K562 (cell line): ENCODE measurements at regions of chr12 and their contacts with region 1.

Region 1: DNA sequence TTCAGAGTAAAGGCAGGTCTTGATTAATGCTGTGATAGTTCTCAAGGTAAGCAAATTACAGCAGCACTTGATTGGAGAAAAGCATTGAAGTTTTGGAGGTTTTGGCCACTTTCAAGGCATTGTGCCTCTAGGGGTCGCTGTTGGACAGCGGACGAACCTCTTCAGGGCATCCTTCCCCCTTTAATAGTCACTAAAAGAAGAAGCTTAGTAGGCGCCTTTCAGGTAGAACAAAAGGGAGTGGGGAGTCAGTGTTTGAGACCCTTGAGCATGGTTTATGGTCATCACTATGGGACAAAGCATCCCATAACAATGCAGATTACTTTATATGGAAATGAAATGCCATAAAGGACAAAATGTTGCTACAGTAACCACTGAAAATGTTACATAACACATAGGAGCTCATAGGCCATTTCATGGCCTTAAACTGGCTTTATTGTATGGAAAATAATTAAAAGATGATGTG is 199.5 kb upstream of the DCN start:
- DNase-seq: peak; percentile 42 to 85 (median 50)
- ATAC-seq: peak; percentile 84
- H3K4me3 ChIP-seq: no peak overlapping the region
- H3K27ac ChIP-seq: no peak overlapping the region
- H3K4me1 ChIP-seq: no peaks in the 10 kb centered on the region
- H3K27me3 ChIP-seq: no peaks in the 10 kb centered on the region
- CTCF ChIP-seq: peak; percentile 66 to 88 (median 82)
- EP300 ChIP-seq: no peak
- POLR2A ChIP-seq: no peak
- RAD21 ChIP-seq: peak; percentile 79 to 83

Region 2: DNA sequence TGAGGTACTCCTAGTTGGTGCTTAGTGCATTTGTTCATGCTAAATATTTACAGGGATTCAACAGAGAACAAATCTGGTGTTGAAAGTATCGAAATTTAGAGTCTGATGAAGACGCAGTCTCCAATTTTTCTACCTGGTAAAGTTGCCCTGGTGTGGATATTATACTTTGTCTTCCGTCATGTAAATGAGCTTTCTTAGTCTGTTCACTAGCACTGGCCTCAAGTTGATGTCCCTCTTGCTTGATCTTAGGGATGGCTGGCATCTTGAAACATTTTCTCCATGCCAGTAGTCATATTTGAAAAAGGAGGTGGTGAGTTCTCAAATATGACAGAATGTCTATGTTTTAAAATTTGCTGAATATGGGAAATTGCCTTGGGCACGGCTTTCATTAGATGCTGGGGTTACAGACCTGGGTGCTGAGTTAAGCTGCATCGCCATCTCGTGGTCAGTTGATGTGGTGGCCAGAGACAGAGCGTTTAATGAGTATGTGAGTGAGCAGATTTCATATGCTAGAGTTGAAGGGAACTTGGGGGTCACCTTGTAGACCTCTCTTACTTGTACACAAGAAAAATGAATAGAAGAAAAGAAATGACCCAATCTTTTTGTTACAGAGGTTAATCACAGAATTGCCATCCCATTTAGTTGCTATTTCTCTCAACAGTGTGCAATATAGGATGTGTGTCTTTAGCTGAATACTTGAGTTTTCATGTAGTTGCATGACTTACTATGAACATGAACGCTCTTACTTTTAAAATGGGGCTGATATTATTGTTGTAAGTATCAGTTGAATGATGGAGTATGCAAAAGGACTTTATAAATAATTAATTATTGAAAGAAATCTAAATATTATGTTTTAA is 26.7 kb before region 1 on chr12:
- CTCF ChIA-PET with region 1: no interaction called
- POLR2A ChIA-PET with region 1: no interaction called
- in situ Hi-C with region 1: no loop called
- intact Hi-C with region 1: no loop called
- DNase-seq: peak; percentile 41 to 68 (median 48)
- ATAC-seq: peak; percentile 99
- H3K4me3 ChIP-seq: no peak overlapping the region
- H3K27ac ChIP-seq: no peak overlapping the region
- H3K4me1 ChIP-seq: no peaks in the 10 kb centered on the region
- H3K27me3 ChIP-seq: no peaks in the 10 kb centered on the region
- CTCF ChIP-seq: peak; percentile 66 to 84 (median 73)
- EP300 ChIP-seq: no peak
- POLR2A ChIP-seq: no peak
- RAD21 ChIP-seq: peak; percentile 36 to 58; a peak in 3 of 4 replicates

Region 3: GRCh38 chr12:91416626-91417025 is 34.5 kb after region 1 on chr12:
- CTCF ChIA-PET with region 1: no interaction called
- POLR2A ChIA-PET with region 1: no interaction called
- in situ Hi-C with region 1: no loop called
- intact Hi-C with region 1: no loop called
- DNase-seq: no peak
- ATAC-seq: no peak
- H3K4me3 ChIP-seq: no peak overlapping the region
- H3K27ac ChIP-seq: no peak overlapping the region
- H3K4me1 ChIP-seq: no peaks in the 10 kb centered on the region
- H3K27me3 ChIP-seq: no peaks in the 10 kb centered on the region
- CTCF ChIP-seq: no peak
- EP300 ChIP-seq: no peak
- POLR2A ChIP-seq: no peak
- RAD21 ChIP-seq: no peak

Region 4: DNA sequence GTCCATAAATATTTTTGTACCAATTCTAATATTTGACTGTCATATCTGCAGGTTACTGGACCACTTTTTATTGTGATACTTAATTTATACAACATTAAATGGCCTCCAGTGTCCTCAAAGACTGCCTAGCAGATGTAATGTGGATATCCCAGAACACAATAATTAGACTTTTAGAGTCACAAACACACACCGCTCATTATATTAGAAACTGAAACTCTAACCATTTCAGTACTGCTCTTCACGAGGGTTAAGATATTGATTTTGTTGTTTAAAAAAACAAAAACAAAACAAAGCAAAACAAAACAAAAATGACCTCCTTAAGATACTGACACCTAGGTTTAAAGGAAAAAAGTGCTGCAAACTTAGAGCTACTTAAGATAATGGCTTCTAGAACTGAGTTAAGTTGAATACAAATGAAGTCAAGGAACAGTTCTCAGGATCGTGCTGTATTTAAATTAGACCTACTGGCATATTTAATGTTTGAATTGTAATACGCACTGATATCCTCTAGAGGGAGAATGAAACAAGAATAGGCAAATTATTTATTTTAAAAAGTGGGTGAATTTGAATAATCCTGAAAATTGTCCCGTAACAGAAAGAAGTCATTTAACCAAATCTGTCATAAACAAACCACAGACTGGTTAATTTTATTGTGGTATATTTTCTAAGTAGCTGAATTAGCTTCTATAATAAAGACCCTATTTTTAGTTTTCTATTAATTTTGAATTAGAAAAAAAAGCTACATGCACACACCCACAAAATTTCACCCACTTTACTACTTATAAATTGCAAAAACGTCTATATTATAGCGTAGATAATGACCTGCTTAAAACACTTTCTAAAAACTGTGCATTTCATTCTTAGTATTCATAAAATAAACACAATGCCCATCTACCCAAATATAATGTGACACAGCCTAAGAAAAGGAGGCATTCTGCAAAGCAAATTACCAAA is 195.8 kb after region 1 on chr12:
- CTCF ChIA-PET with region 1: no interaction called
- POLR2A ChIA-PET with region 1: no interaction called
- in situ Hi-C with region 1: no loop called
- intact Hi-C with region 1: loop called (anchors 5 kb)
- DNase-seq: peak in 2 of 4 experiments; percentile 11 to 29
- ATAC-seq: peak; percentile 67; the same call in 2 of the 3 replicates
- H3K4me3 ChIP-seq: no peak overlapping the region
- H3K27ac ChIP-seq: no peak overlapping the region
- H3K4me1 ChIP-seq: no peaks in the 10 kb centered on the region
- H3K27me3 ChIP-seq: no peaks in the 10 kb centered on the region
- CTCF ChIP-seq: peak; percentile 2 to 58 (median 30); a peak in 3 of 6 replicates
- EP300 ChIP-seq: no peak
- POLR2A ChIP-seq: no peak
- RAD21 ChIP-seq: peak; percentile 22 to 42; a peak in 2 of 4 replicates

Region 5: DNA sequence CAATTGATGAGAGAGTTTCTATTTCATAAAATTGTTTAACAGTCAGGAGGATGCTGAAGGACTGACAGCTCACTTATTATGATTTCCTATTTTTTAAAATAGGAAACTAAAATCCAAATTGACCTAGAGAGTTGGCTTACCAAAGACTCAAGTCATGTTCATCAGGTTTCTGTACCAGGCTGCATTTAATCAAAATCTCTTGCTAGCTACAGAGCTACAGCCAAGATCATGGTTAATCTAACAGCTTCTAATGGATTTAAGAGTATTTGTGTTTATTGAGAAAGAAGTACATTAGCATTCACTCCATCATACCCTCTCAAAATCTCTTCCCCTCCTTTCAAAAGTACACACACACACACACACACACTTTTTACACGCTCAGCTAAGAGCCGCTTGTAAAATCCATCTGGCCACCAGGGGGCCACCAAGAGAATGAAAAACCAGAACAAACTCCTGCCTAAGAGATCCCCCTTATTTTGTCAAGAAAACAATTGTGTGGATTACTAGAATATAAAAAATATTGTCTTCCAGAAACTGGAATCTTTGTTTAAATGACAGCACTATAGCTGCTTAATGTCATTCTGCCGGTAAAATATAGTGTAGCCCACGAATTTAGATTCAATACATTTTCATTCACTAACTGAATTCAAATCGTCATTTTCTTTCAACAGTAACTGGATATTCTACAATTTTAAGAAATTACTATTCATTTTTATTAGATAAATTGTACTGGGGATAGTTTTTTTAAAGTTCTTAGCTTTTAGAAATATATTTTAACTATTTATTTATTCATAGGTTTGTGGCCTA is 429.6 kb after region 1 on chr12:
- CTCF ChIA-PET with region 1: no interaction called
- POLR2A ChIA-PET with region 1: no interaction called
- in situ Hi-C with region 1: no loop called
- intact Hi-C with region 1: loop called (anchors 10 kb)
- DNase-seq: peak; percentile 36 to 65 (median 55)
- ATAC-seq: peak; percentile 90
- H3K4me3 ChIP-seq: no peak overlapping the region
- H3K27ac ChIP-seq: no peak overlapping the region
- H3K4me1 ChIP-seq: no peaks in the 10 kb centered on the region
- H3K27me3 ChIP-seq: no peaks in the 10 kb centered on the region
- CTCF ChIP-seq: peak; percentile 53 to 74 (median 64)
- EP300 ChIP-seq: no peak
- POLR2A ChIP-seq: no peak
- RAD21 ChIP-seq: peak; percentile 63 to 65

Region 6: GRCh38 chr12:92608151-92609091 is 1226.3 kb after region 1 on chr12:
- CTCF ChIA-PET with region 1: interaction called, 10 read pairs
- POLR2A ChIA-PET with region 1: no interaction called
- in situ Hi-C with region 1: no loop called
- intact Hi-C with region 1: no loop called
- DNase-seq: peak in 3 of 4 experiments; percentile 11 to 44 (median 27)
- ATAC-seq: peak; percentile 70; the same call in 2 of the 3 replicates
- H3K4me3 ChIP-seq: no peak overlapping the region
- H3K27ac ChIP-seq: no peak overlapping the region
- H3K4me1 ChIP-seq: no peaks in the 10 kb centered on the region
- H3K27me3 ChIP-seq: no peaks in the 10 kb centered on the region
- CTCF ChIP-seq: peak; percentile 35 to 68 (median 58); a peak in 4 of 6 replicates
- EP300 ChIP-seq: no peak
- POLR2A ChIP-seq: no peak
- RAD21 ChIP-seq: peak; percentile 46 to 72

Region 7: DNA sequence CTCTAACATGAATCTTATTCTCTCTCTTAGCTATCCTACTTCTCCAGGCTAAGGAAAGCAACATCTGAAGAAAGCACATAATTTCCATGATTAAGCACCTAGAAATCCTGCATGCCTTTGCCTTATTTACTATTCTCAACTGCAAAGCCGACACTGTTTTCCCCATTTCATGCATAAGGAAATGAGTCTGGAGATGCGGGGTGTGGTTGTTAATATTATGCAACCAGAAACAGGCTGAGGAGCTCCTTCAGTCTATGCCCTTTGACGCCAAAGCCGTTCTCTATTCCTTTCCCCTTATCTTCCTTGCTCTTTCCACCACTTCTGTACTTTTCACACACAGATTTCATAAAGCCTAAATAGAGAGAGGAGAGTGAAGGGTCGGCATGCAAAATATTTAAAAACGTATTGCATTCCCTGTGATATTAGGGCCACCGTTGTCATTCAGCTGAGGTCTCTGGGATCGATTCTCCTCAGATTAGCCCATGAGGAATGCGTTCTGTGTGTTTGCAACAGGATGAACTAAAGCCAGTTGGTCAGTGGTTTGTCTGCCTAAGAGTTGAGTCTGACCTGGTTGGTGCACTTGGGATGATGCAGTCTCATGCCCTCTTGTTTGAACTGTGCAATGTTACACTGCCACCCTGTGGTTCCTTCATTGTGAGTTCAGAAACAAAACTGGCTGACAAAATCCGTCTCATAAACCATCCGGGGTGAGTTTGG is 1267.6 kb after region 1 on chr12:
- CTCF ChIA-PET with region 1: no interaction called
- POLR2A ChIA-PET with region 1: no interaction called
- in situ Hi-C with region 1: no loop called
- intact Hi-C with region 1: loop called (anchors 5 kb)
- DNase-seq: peak; percentile 42 to 77 (median 50)
- ATAC-seq: peak; percentile 97
- H3K4me3 ChIP-seq: no peak overlapping the region
- H3K27ac ChIP-seq: no peak overlapping the region
- H3K4me1 ChIP-seq: no peaks in the 10 kb centered on the region
- H3K27me3 ChIP-seq: peaks cover 8 to 13% of the 10 kb centered on the region in 2 experiments; a peak in 4 of 5 replicates
- CTCF ChIP-seq: peak; percentile 65 to 78 (median 66)
- EP300 ChIP-seq: no peak
- POLR2A ChIP-seq: no peak
- RAD21 ChIP-seq: peak; percentile 81 to 89